Left colon (tissue), 2 donors: ENCODE measurements at regions of chr4 and their contacts with region 1.

Region 1: DNA sequence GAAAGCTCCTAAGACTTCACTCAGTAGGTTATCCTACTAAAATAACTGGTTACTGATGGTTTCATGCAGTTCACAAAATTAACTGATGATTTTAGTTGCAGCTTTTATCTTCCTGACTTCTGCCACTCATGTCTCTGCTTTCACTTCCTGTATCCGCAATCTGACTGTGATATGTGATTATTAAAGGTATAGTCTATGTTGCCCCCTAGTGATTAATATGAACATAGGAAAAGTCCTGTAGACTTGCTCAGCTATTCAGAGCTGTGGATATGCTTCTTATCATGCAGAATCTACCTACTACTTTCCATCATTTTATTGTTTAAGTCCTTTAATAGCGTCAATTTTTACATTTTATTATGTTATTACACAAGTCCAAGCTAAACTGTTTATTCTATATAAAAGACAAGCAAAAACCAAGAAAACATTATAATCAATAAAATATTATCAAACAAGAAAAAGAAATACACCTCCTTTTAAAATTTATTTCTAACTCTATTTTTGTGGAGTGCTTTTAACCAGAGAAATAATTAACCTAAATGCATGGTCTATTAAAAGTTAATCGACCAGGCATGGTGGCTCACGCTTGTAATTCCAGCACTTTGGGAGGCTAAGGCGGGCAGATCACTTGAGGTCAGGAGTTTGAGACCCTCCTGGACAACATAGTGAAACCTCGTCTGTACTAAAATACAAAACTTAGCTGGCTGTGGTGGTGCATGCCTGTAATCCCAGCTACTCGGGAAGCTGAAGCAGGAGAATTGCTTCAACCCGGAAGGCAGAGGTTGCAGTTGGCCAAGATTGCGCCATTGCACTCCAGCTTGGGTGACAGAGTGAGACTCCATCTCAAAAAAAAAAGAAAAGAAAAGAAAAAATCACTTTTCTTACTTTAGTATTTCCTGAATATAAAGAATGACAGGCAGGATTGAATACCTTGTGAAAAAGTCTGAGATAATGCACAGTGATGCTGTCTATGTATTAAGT is 40.4 kb upstream of the TLR2 start:
- DNase-seq: no peak
- ATAC-seq: peak; percentile 89

Region 2: GRCh38 chr4:153332936-153333335 is 310.8 kb before region 1 on chr4:
- intact Hi-C with region 1: no loop called
- DNase-seq: no peak
- ATAC-seq: no peak

Region 3: GRCh38 chr4:153344131-153345010 is 299.3 kb before region 1 on chr4 and contains the start of gene MND1:
- intact Hi-C with region 1: loop called in 1 of 2 experiments (anchors 10 kb)
- DNase-seq: peak; percentile 79 to 87
- ATAC-seq: peak; percentile 86
- total RNA-seq, gene MND1: 1.5 to 2.5 TPM